PC-3 (cell line): ENCODE measurements at regions of chr22 and their contacts with region 1.

Region 1: DNA sequence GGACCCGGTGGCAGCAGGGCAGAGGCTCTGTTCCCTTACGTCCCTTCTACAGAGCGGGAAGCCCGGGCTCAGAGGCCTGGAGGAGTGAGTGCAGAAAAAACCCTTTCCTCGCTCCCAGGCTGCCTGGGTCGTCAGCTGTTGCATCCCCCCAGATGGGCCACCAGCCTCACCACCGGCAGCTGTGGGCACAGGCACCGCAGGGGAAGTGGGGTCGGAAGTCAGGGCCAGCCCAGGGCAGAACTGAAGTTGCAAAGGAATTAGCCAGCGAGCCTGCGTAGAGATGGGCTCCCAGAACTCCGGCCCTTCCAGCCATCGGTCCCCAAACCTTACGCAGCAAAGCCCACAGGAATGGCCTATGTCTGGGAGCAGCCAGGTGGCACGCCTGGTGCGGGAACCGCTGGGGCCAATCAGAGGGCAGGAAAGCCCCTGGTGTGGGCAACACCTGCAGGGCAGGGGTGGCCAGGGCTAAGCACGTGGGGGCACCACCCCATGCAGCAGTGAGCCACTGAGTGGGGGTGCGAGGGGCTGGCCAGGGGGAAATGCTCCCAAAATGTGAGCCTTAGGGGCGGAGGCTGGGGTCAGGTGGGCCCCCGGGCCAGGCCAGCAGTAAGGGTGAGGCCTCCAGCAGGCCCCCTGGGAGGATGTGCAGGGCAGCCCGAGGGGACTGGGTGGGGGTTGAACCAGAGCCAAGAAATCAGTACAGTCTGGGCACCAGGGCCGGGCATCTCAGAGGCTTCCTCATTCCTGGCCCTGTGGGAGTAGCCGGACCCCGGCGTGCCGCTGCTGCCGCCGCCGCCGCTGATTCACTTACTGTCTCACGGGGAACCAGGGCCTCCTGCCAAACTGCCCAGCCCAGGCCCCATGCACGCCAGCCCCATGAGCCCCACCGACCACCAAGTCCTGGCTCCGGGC is 58.2 kb downstream of the WNT7B start:
- DNase-seq: peak; percentile 80
- ATAC-seq: peak; percentile 79
- H3K4me3 ChIP-seq: peak overlapping the region; percentile 56
- H3K27ac ChIP-seq: peak overlapping the region; percentile 97
- H3K4me1 ChIP-seq: peaks cover 27% of the 10 kb centered on the region
- H3K27me3 ChIP-seq: no peaks in the 10 kb centered on the region
- CTCF ChIP-seq: no peak

Region 2: GRCh38 chr22:45717789-45718188 is 200.9 kb before region 1 on chr22:
- CTCF ChIA-PET with region 1: no interaction called
- POLR2A ChIA-PET with region 1: no interaction called
- intact Hi-C with region 1: no loop called
- DNase-seq: peak; percentile 37
- ATAC-seq: peak; percentile 59
- H3K4me3 ChIP-seq: no peak overlapping the region
- H3K27ac ChIP-seq: peak overlapping the region; percentile 16; the same call in 1 of the 2 replicates
- H3K4me1 ChIP-seq: peaks cover 17% of the 10 kb centered on the region
- H3K27me3 ChIP-seq: no peaks in the 10 kb centered on the region
- CTCF ChIP-seq: no peak

Region 3: DNA sequence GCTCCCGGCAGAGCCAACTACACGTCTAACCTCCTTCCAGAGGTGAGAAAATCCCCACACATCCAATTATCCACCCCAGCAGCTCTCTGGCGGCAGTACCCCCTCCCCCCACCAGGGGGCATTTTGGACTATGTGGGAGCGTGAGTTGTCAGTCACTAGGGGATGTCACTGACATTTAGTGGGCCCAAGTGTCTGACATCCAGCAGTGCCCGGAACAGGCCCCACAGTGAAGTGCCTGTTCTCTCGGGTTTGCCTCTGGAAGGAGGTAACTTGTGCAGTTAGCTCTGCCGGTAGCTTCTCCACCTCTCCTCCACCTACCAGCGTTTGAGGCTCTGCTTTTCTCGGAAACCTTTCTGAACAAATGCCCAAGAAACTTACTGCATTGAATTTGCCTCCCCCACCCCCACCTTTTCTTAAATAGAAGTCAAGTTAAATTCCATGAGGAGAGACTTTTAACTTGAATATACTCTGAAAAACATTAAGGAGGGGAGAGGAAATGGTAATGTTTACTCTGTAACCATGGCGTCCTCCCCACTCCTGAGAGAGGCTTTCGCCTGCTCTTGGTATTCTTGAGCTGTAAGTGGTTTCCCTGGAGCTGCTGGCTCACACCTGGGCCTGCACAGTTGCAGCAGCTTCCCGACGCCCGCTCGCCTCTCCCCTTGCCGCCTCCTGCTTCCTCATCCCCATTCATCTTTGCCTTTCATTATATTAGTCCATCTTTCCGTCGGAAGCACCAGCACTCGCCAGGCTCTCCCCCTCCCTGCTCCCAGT is 54.5 kb before region 1 on chr22:
- CTCF ChIA-PET with region 1: no interaction called
- POLR2A ChIA-PET with region 1: no interaction called
- intact Hi-C with region 1: loop called (anchors 2 kb)
- DNase-seq: peak; percentile 72
- ATAC-seq: peak; percentile 54
- H3K4me3 ChIP-seq: no peak overlapping the region
- H3K27ac ChIP-seq: no peak overlapping the region
- H3K4me1 ChIP-seq: peaks cover 34% of the 10 kb centered on the region
- H3K27me3 ChIP-seq: no peaks in the 10 kb centered on the region
- CTCF ChIP-seq: peak; percentile 90